Right ventricle myocardium inferior (tissue), 1 donor: ENCODE measurements at regions of chr1 and their contacts with region 1.

Region 1: GRCh38 chr1:91282695-91283420 is 121.8 kb downstream of the HFM1 start:
- DNase-seq: no peak
- ATAC-seq: peak; percentile 62

Region 2: GRCh38 chr1:91404151-91405012 is 121.5 kb after region 1 on chr1 and contains the start of gene HFM1:
- intact Hi-C with region 1: loop called (anchors 2 kb)
- DNase-seq: peak; percentile 92
- ATAC-seq: peak; percentile 99
- total RNA-seq, gene HFM1: 1.6 TPM

Region 3: DNA sequence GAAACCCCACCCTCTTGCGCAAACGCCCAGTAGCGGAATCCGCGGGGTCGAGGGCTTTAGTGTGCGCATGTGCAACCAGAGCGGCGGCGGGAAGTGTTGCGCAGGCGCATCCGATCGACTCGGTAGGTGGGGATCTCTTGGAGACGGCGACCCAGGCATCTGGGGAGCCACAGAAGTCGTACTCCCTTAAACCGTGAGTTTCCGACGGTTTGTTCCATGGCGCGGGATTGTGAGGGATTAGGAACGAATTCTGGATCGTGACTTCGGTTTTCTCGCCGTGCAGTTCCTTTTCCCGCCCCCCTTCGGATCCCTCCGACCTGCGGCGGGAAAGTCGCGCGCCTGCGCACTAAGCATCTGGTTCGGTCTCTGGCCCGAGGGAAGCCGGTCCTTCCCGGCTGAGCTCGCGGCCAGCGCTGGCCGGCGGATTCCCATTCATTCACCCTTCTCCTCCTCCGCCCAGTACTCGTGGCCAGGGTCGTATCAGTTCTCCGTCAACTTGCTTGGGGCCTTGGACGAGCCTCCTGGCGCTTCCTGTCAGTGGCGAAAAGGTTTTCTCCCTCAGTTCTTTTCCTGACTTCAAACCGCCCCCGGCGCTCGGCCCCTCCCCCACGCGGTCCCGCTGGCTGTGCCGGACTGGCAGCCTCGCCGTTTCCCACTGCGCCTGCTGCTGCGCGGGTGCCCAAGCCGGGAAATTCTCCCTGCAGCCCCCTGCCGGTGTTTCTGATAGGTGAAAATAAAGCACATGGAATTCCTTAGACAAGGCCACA is 218.1 kb after region 1 on chr1 and contains the start of gene CDC7:
- intact Hi-C with region 1: loop called (anchors 2 kb)
- DNase-seq: peak; percentile 94
- ATAC-seq: peak; percentile 96
- total RNA-seq, gene CDC7: 0.95 TPM

Region 4: GRCh38 chr1:91929250-91929649 is 646.4 kb after region 1 on chr1:
- intact Hi-C with region 1: loop called (anchors 5 kb)
- DNase-seq: no peak
- ATAC-seq: peak; percentile 63

Region 5: DNA sequence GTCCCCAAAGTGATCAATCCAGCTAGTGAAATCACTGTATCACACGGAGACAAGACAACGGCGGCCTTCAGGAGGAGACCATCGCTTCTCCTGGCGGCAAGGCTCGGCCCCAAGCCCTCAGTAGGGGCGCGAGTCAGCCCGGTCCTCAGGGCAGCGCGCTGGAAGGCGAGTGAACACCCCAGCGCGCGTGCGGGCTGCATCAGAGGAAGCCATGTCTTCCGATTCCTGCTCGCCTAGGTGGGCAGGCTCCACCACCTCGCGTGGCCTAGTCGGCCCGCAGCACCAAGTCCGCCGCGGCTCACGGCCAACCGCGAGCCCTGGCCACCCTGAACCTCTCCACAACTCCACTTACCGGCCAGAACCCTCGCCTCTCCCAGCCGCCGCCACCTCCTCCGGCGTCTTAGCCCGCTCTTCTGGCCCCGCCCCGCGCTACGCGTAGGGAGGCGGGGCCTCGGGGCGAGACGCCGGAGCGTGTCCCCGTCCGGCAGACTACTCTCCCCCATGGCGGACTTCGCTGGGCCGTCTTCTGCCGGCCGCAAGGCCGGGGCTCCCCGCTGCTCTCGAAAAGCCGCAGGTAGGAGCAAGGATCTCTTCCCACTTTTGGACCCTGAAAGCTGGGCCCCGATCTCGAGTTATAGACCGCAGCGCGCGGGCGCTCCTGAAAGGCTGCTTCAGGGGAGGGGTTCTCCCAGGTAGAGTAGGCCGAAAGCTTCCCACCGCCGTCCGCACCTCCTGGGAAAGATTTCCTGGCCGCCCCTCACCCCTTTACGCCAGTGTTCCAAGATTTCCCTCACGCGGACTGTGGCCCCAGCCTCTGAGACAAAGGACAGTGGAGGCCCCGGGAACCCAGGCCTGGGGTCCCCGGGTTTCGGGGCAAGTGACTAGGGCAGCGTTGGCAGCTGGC is 1016.0 kb after region 1 on chr1 and contains the starts of genes GLMN and RPAP2:
- intact Hi-C with region 1: loop called (anchors 10 kb)
- DNase-seq: peak; percentile 93
- ATAC-seq: peak; percentile 100
- total RNA-seq, gene GLMN: 5.4 TPM
- total RNA-seq, gene RPAP2: 22.5 TPM